HepG2 (cell line): ENCODE measurements at regions of chr16 and their contacts with region 1.

Region 1: DNA sequence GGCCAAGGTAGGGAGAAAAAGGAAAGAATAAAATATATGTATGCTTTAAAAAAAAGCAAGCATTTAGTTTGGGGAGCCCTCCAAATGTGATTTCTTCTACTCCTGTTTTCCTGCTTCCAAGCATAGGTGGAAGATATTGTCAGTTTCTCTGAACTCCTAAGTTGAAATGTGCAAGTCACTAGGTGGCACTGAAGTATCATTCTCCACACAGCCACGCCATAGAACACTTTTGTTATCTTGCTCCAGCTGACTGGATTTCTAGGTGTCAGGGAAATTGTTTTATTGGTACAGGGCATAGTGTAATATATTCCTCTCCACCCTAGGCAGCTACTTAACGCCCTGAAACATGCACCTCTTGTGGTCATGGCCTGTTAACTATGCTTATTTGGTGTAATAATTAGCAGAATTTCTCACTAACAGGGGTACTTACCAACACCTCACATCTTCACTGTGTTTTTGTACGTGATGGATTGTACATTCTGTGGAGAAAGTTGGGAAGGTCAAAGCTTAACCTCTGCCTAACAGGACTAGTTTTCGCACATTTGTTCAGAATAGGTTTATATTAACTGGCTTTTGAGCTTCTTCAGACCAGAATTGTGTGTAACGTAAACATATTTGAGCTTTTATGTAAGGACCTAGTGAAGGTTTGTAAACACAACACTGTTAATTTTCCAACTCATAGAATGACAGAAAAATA is 69.3 kb downstream of the FTO start:
- DNase-seq: peak; percentile 81
- ATAC-seq: peak; percentile 86
- H3K4me3 ChIP-seq: peak overlapping the region in 2 of 3 experiments; percentile 12 to 15; a peak in 2 of 6 replicates
- H3K27ac ChIP-seq: peak overlapping the region; percentile 5
- H3K4me1 ChIP-seq: peaks cover 73% of the 10 kb centered on the region
- H3K27me3 ChIP-seq: no peaks in the 10 kb centered on the region
- CTCF ChIP-seq: peak; percentile 92
- EP300 ChIP-seq: no peak
- POLR2A ChIP-seq: no peak
- RAD21 ChIP-seq: peak; percentile 90

Region 2: GRCh38 chr16:53789137-53789536 is 15.8 kb after region 1 on chr16:
- CTCF ChIA-PET with region 1: no interaction called
- POLR2A ChIA-PET with region 1: no interaction called
- in situ Hi-C with region 1: no loop called
- intact Hi-C with region 1: no loop called
- DNase-seq: no peak
- ATAC-seq: no peak
- H3K4me3 ChIP-seq: no peak overlapping the region
- H3K27ac ChIP-seq: no peak overlapping the region
- H3K4me1 ChIP-seq: no peaks in the 10 kb centered on the region
- H3K27me3 ChIP-seq: no peaks in the 10 kb centered on the region
- CTCF ChIP-seq: no peak
- EP300 ChIP-seq: no peak
- POLR2A ChIP-seq: no peak
- RAD21 ChIP-seq: no peak

Region 3: DNA sequence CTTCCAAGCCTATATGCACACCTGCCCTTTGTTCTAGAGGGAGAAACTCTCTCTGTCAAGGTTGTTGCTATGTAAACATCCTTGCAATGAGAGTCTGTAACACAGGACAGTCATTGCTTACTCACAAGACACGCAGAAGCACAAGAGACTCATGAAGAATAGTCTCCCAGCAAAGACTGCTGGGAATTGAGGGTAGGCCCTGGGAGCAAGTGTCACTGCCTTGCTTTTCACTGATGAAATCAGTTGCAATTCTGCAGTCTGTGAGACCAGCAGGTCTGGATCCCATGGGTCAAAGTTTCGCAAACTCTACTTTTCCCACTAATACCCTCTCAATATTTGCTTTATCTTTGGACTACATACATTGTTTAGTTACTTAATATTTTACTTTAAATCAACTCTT is 108.1 kb after region 1 on chr16:
- CTCF ChIA-PET with region 1: no interaction called
- POLR2A ChIA-PET with region 1: interaction called, 13 read pairs
- in situ Hi-C with region 1: no loop called
- intact Hi-C with region 1: no loop called
- DNase-seq: peak; percentile 87
- ATAC-seq: peak; percentile 97
- H3K4me3 ChIP-seq: no peak overlapping the region; a peak in 1 of 6 replicates
- H3K27ac ChIP-seq: peak overlapping the region; percentile 90
- H3K4me1 ChIP-seq: peaks cover 38% of the 10 kb centered on the region
- H3K27me3 ChIP-seq: no peaks in the 10 kb centered on the region
- CTCF ChIP-seq: no peak
- EP300 ChIP-seq: peak; percentile 69 to 92; a peak in 3 of 4 replicates
- POLR2A ChIP-seq: peak; percentile 33 to 36; a peak in 2 of 4 replicates
- RAD21 ChIP-seq: peak; percentile 42

Region 4: GRCh38 chr16:53945996-53946395 is 172.7 kb after region 1 on chr16:
- CTCF ChIA-PET with region 1: interaction called, 3 read pairs
- POLR2A ChIA-PET with region 1: no interaction called
- in situ Hi-C with region 1: no loop called
- intact Hi-C with region 1: loop called (anchors 1 kb)
- DNase-seq: peak; percentile 57
- ATAC-seq: peak; percentile 81
- H3K4me3 ChIP-seq: no peak overlapping the region
- H3K27ac ChIP-seq: no peak overlapping the region
- H3K4me1 ChIP-seq: peaks cover 39% of the 10 kb centered on the region
- H3K27me3 ChIP-seq: no peaks in the 10 kb centered on the region
- CTCF ChIP-seq: peak; percentile 86
- EP300 ChIP-seq: peak in 1 of 2 experiments; percentile 14; a peak in 1 of 4 replicates
- POLR2A ChIP-seq: no peak
- RAD21 ChIP-seq: peak; percentile 86

Region 5: GRCh38 chr16:54178478-54178976 is 405.2 kb after region 1 on chr16:
- CTCF ChIA-PET with region 1: no interaction called
- POLR2A ChIA-PET with region 1: interaction called, 8 read pairs
- in situ Hi-C with region 1: loop called (anchors 25 kb)
- intact Hi-C with region 1: loop called (anchors 1 kb)
- DNase-seq: no peak
- ATAC-seq: no peak
- H3K4me3 ChIP-seq: no peak overlapping the region
- H3K27ac ChIP-seq: peak overlapping the region; percentile 97
- H3K4me1 ChIP-seq: peaks cover 98% of the 10 kb centered on the region
- H3K27me3 ChIP-seq: no peaks in the 10 kb centered on the region
- CTCF ChIP-seq: no peak
- EP300 ChIP-seq: no peak
- POLR2A ChIP-seq: no peak
- RAD21 ChIP-seq: no peak

Region 6: DNA sequence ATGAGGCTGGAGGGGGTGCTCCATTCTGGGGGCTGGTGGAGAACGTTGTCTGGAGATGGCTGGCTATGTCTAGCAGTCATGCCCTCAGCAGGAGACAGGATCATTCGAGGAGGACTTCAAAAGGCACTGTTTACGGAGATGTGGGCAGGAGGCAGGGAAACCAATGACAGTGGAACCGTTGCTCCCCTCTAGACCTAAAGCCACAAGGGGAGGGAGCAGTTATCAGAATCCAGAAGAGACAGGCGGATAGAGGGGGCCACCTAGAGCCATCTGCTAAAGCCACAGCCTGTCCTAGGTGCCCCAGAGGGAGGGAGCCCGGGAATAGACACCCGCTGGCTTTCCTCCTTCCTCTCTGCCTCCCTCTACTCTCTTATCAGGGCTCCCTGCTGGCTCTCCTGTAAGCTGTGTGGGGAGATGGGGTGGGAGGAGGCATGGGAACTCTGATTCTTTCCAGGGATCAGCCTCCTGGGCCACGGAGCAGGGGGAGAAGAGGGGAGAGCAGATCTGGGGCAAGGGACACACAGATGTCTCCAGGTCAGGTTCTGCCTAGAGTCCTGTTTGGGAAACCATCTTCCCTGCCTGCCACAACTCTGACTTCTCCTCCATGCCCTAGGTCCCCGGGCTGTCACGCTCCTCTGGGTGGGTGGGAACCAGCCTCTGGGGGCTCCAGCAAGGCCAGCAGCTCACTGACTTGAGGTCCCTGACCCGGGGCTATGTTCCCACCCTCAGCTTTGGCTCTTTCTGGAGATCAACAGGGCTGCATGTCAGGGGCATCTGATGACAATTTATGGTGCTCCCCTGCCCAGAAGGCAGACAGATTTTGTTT is 471.0 kb after region 1 on chr16:
- CTCF ChIA-PET with region 1: no interaction called
- POLR2A ChIA-PET with region 1: no interaction called
- in situ Hi-C with region 1: no loop called
- intact Hi-C with region 1: loop called (anchors 1 kb)
- DNase-seq: peak; percentile 77
- ATAC-seq: peak; percentile 95
- H3K4me3 ChIP-seq: peak overlapping the region in 2 of 3 experiments; percentile 10 to 56; a peak in 4 of 6 replicates
- H3K27ac ChIP-seq: no peak overlapping the region
- H3K4me1 ChIP-seq: peaks cover 27% of the 10 kb centered on the region
- H3K27me3 ChIP-seq: peaks cover under 1 to 11% of the 10 kb centered on the region in 2 experiments; a peak in 2 of 5 replicates
- CTCF ChIP-seq: peak; percentile 84
- EP300 ChIP-seq: peak in 1 of 2 experiments; percentile 12; a peak in 1 of 4 replicates
- POLR2A ChIP-seq: no peak
- RAD21 ChIP-seq: peak; percentile 85

Region 7: DNA sequence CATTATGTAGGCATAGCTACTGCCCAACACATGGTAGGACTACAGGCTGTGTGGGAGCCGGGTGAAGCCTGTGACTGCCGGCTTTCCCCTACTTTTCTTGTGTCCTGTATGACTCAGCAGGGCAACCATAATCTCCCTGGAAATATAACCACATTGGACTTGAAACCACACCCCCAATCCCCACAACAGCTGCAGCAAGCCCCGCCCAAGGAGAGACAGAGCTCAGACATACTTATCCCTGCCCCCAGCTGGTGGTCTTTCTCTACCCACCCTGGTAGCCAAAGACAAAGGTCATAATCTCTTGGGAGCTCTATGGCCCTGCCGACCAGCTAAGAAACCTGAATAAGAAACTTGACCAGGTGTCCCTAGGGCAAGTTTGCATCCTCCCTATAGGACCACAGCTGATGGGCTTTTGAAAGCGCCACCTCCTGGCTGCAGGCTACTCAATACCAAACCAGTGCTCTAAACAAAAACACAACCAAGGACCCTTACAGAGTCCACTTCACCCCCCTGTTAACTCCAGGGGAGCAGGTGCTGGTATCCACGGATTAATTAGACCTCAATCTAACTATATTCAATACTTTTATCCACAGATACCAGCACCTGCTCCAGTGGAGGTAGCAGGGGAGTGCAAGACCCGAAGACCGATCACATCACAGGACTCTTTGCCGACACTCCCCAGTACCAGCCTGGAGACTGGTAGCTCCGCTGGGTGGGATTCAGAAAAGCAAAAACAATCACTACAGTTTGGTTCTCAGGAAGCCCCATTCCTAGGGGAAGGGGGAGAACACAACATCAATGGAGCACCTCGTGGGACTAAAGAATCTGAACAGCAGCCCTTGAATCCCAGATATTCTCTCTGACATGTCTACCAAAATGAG is 1248.5 kb after region 1 on chr16:
- CTCF ChIA-PET with region 1: no interaction called
- POLR2A ChIA-PET with region 1: no interaction called
- in situ Hi-C with region 1: no loop called
- intact Hi-C with region 1: loop called (anchors 5 kb)
- DNase-seq: peak; percentile 23
- ATAC-seq: peak; percentile 89
- H3K4me3 ChIP-seq: no peak overlapping the region
- H3K27ac ChIP-seq: no peak overlapping the region
- H3K4me1 ChIP-seq: no peaks in the 10 kb centered on the region
- H3K27me3 ChIP-seq: no peaks in the 10 kb centered on the region
- CTCF ChIP-seq: peak; percentile 49
- EP300 ChIP-seq: no peak
- POLR2A ChIP-seq: no peak
- RAD21 ChIP-seq: no peak